MCF 10A (cell line): ENCODE measurements at regions of chr2 and their contacts with region 1.

Region 1: DNA sequence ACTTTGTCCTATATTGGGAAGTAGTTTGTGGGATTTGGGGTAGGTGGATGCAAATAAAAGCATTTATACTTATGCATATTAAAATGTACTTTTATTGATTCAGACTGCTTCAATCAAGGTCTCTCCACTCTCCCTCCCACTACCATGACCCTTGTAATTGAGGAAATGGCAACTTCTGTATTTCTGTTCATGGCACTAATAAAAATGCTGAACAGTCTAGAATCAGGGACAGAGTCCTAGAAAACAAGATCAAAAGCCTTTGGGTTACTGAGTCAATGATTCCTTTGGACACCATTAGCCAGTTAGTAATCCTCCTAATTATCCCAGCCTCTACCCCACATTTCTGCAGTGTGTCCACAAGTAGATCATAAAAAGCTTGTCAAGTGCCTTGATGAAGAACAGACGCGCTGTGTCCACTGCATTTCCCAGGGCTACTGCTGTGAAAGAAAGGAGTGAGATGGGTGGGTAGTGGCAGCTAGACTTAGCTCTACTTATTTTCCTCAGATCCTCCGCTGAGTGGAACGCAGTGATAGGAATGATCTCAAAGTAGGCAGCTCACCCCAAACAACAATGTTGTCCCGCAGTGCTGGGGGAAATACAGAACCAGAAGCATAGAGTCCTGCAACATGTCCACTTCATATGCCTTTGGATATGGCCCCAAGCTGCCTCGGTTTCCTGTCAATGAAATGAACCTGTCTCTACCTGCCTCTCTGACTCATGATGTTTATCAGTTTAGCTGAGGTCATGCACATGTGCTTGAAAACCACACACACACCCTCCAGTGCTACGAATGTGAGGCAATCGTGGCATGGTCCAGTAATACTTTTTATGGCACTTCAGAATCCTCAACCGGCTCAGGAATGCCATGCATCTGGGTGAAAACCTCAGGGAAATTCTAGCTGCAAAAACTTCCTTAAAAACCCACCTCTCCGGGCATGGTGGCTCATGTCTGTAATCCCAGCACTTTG is 115.5 kb downstream of the COL6A3 start:
- DNase-seq: peak; percentile 96
- H3K4me3 Mint-ChIP-seq: no peak overlapping the region
- H3K27ac Mint-ChIP-seq: peak overlapping the region; percentile 86
- H3K4me1 Mint-ChIP-seq: peaks cover 50% of the 10 kb centered on the region
- H3K27me3 Mint-ChIP-seq: no peaks in the 10 kb centered on the region
- CTCF ChIP-seq: no peak

Region 2: GRCh38 chr2:237262838-237263771 is 35.3 kb before region 1 on chr2:
- CTCF ChIA-PET with region 1: no interaction called
- POLR2A ChIA-PET with region 1: interaction called, 12 read pairs
- intact Hi-C with region 1: no loop called
- DNase-seq: peak; percentile 87
- H3K4me3 Mint-ChIP-seq: peak overlapping the region; percentile 53
- H3K27ac Mint-ChIP-seq: peak overlapping the region; percentile 80
- H3K4me1 Mint-ChIP-seq: peaks cover 28% of the 10 kb centered on the region
- H3K27me3 Mint-ChIP-seq: no peaks in the 10 kb centered on the region
- CTCF ChIP-seq: no peak

Region 3: DNA sequence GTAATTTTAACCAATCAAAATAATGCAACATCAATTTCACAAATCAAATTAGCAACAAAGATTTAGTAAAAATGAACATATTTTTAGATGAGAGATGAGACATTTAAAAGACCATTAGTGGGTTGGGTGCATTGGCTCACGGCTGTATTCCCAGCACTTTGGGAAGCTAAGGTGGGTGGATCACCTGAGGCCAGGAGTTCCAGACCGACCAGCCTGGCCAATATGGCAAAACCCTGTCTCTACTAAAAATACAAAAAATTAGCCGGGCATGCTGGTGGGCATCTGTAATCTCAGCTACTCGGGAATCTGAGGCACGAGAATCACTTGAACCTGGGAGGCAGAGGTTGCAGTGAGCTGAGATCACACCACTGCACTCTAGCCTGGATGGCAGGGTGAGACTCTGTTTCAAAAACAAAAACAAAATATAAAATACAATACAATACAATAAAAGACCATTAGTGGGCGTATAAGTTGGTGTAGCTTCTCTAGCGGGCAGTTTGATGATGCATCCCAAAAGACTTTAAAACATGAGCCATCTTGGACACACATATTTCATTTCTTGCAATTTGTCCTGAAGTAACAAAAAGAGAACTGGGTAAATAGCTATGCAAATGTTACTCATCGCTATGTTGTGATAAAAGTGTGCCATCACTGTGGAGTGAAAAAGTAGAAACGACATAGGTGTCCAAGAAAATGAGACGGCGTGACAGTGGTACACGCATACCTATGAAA is 13.8 kb after region 1 on chr2:
- CTCF ChIA-PET with region 1: no interaction called
- POLR2A ChIA-PET with region 1: interaction called, 13 read pairs
- intact Hi-C with region 1: no loop called
- DNase-seq: no peak
- H3K4me3 Mint-ChIP-seq: no peak overlapping the region
- H3K27ac Mint-ChIP-seq: no peak overlapping the region
- H3K4me1 Mint-ChIP-seq: peaks cover 12% of the 10 kb centered on the region
- H3K27me3 Mint-ChIP-seq: no peaks in the 10 kb centered on the region
- CTCF ChIP-seq: no peak

Region 4: GRCh38 chr2:237529452-237530402 is 231.3 kb after region 1 on chr2:
- CTCF ChIA-PET with region 1: no interaction called
- POLR2A ChIA-PET with region 1: no interaction called
- intact Hi-C with region 1: no loop called
- DNase-seq: no peak
- H3K4me3 Mint-ChIP-seq: no peak overlapping the region
- H3K27ac Mint-ChIP-seq: no peak overlapping the region
- H3K4me1 Mint-ChIP-seq: no peaks in the 10 kb centered on the region
- H3K27me3 Mint-ChIP-seq: no peaks in the 10 kb centered on the region
- CTCF ChIP-seq: no peak